ENCODE measurements at regions of chr19 and their contacts with region 1.

Region 1: GRCh38 chr19:8355631-8356402 is 8.1 kb upstream of the ANGPTL4 start:
- DNase-seq: peak; percentile 72
- ATAC-seq: peak; percentile 59
- H3K4me3 ChIP-seq: no peak overlapping the region; a peak in 1 of 6 replicates
- H3K27ac ChIP-seq: peak overlapping the region; percentile 17
- H3K4me1 ChIP-seq: peaks cover 71% of the 10 kb centered on the region
- H3K27me3 ChIP-seq: no peaks in the 10 kb centered on the region
- CTCF ChIP-seq: peak; percentile 60
- EP300 ChIP-seq: peak in 1 of 2 experiments; percentile 53; a peak in 1 of 4 replicates
- POLR2A ChIP-seq: no peak
- RAD21 ChIP-seq: no peak

Region 2: GRCh38 chr19:8252922-8253589 is 102.8 kb before region 1 on chr19:
- CTCF ChIA-PET with region 1: no interaction called
- POLR2A ChIA-PET with region 1: no interaction called
- in situ Hi-C with region 1: no loop called
- intact Hi-C with region 1: no loop called
- DNase-seq: peak; percentile 67
- ATAC-seq: peak; percentile 74
- H3K4me3 ChIP-seq: no peak overlapping the region
- H3K27ac ChIP-seq: no peak overlapping the region
- H3K4me1 ChIP-seq: peaks cover 29% of the 10 kb centered on the region
- H3K27me3 ChIP-seq: no peaks in the 10 kb centered on the region; a peak in 1 of 5 replicates
- CTCF ChIP-seq: peak; percentile 97
- EP300 ChIP-seq: no peak
- POLR2A ChIP-seq: 0 out of 4 replicates have a peak, but pooled peaks of 1 of the 2 experiments have one; percentile 21
- RAD21 ChIP-seq: peak; percentile 98

Region 3: GRCh38 chr19:8333771-8334457 is 21.9 kb before region 1 on chr19:
- CTCF ChIA-PET with region 1: no interaction called
- POLR2A ChIA-PET with region 1: no interaction called
- in situ Hi-C with region 1: no loop called
- intact Hi-C with region 1: no loop called
- DNase-seq: no peak
- ATAC-seq: peak; percentile 22; the same call in 1 of the 3 replicates
- H3K4me3 ChIP-seq: peak overlapping the region in 1 of 3 experiments; percentile 65; a peak in 2 of 6 replicates
- H3K27ac ChIP-seq: no peak overlapping the region
- H3K4me1 ChIP-seq: peaks cover 42% of the 10 kb centered on the region
- H3K27me3 ChIP-seq: peaks cover 10 to 56% of the 10 kb centered on the region in 2 experiments
- CTCF ChIP-seq: no peak
- EP300 ChIP-seq: no peak
- POLR2A ChIP-seq: no peak
- RAD21 ChIP-seq: no peak

Region 4: GRCh38 chr19:8373867-8374813 is 18.3 kb after region 1 on chr19:
- CTCF ChIA-PET with region 1: interaction called, 42 read pairs
- POLR2A ChIA-PET with region 1: interaction called, 21 read pairs
- in situ Hi-C with region 1: no loop called
- intact Hi-C with region 1: loop called (anchors 1 kb)
- DNase-seq: peak; percentile 98
- ATAC-seq: peak; percentile 91
- H3K4me3 ChIP-seq: no peak overlapping the region
- H3K27ac ChIP-seq: peak overlapping the region; percentile 84
- H3K4me1 ChIP-seq: peaks cover 70% of the 10 kb centered on the region
- H3K27me3 ChIP-seq: no peaks in the 10 kb centered on the region
- CTCF ChIP-seq: peak; percentile 91
- EP300 ChIP-seq: peak; percentile 96
- POLR2A ChIP-seq: peak in 1 of 2 experiments; percentile 23; a peak in 1 of 4 replicates
- RAD21 ChIP-seq: peak; percentile 94

Region 5: DNA sequence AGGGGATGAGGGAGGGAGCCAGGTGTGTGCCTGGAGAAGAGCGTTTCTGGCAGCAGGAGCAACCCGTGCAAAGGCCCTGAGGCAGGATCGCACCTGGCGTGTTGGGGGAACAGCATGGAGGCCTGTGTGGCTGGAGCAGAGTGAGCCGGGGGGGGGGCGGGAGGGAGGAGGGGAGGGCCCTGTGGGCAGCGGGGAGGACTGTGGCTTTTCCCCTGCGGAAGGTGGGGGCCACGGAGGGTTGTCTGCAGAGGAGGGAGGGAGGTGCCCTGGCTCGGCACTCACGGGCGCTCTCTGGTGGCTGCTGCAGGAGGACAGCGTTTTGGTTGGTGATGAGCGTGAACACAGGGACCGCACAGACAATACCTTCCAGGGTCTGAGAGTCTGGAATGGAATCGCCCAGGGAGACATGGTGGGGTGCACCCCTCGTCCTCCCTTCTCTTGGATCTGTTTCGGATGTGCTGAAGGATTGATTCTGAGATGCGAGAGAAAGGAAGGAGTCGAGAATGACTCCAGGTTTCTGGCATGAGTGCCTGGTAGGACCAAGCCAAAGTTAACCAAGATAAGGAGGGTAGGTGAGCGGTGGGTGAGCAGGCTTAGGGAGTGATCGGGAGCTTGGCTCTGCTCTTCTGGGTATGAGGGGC is 40.9 kb after region 1 on chr19:
- CTCF ChIA-PET with region 1: interaction called, 35 read pairs
- POLR2A ChIA-PET with region 1: interaction called, 12 read pairs
- in situ Hi-C with region 1: loop called (anchors 5 kb)
- intact Hi-C with region 1: loop called (anchors 1 kb)
- DNase-seq: peak; percentile 35
- ATAC-seq: peak; percentile 48
- H3K4me3 ChIP-seq: no peak overlapping the region
- H3K27ac ChIP-seq: no peak overlapping the region
- H3K4me1 ChIP-seq: peaks cover 55% of the 10 kb centered on the region
- H3K27me3 ChIP-seq: no peaks in the 10 kb centered on the region
- CTCF ChIP-seq: peak; percentile 81
- EP300 ChIP-seq: no peak
- POLR2A ChIP-seq: no peak
- RAD21 ChIP-seq: peak; percentile 71

Region 6: GRCh38 chr19:8444645-8445487 is 89.0 kb after region 1 on chr19 and contains the start of gene HNRNPM:
- CTCF ChIA-PET with region 1: no interaction called
- POLR2A ChIA-PET with region 1: interaction called, 4 read pairs
- in situ Hi-C with region 1: no loop called
- intact Hi-C with region 1: loop called (anchors 10 kb)
- DNase-seq: peak; percentile 95
- ATAC-seq: peak; percentile 91
- H3K4me3 ChIP-seq: peak within 1 kb of the TSS; percentile 93 to 99 (median 99)
- H3K27ac ChIP-seq: peak within 1 kb of the TSS; percentile 95
- H3K4me1 ChIP-seq: peaks cover 70% of the 10 kb centered on the region
- H3K27me3 ChIP-seq: no peaks in the 10 kb centered on the region
- CTCF ChIP-seq: 0 out of 2 replicates have a peak, but pooled peaks have one; percentile 2
- EP300 ChIP-seq: 0 out of 4 replicates have a peak, but pooled peaks of 1 of the 2 experiments have one; percentile 16
- POLR2A ChIP-seq: peak; percentile 75 to 85
- RAD21 ChIP-seq: peak; percentile 38
- total RNA-seq, gene HNRNPM: 102 and 144 TPM in 2 replicates

Measured in HepG2 (cell line).